ENCODE measurements at regions of chr11 and their contacts with region 1.

Region 1: DNA sequence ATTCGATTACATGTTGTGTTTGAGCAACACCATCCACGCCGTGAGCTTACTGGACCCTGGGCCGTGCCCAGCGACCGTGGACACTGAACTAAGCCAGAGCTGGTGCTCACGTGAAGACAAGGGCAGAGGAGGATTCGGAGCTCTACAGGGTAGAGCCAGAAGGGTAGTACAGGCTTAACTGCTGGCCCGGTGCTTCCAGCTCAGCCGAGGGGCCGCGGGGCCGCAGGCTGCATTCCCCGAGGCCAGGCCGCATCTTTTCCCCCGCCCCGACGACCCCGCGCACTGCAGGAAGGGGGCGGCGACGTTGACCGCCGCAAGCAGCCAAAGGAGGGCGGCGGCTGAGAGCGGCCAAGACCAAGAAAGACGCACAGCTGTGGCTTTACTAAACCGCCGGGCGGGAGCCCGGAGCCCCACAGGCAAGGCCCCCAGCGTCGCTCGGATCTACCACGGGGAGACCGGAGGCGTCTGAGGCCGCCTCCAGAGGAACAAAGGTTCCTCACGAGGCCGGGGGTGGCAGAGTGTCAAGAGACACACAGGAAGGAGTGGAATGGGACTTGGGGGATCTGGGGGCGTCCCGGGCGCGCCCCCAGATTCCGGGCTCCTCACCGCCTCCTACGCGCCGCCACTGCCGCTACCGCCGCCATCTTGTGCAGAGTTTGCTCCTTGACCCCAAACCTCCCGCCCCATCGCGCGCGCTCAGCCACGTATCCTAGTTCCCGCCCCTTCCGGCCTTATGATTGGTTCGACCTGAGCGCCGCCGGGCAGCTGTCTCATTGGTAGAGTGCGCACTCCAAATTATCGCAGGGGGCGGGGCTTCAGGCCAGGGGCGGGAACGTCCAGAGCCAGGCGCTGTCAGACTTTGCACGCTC is at the start of gene GANAB:
- DNase-seq: peak; percentile 99
- ATAC-seq: peak; percentile 98
- H3K4me3 ChIP-seq: peak within 1 kb of the TSS; percentile 95
- H3K27ac ChIP-seq: peak within 1 kb of the TSS; percentile 64
- H3K4me1 ChIP-seq: peaks cover 10% of the 10 kb centered on the region
- H3K27me3 ChIP-seq: no peaks in the 10 kb centered on the region
- CTCF ChIP-seq: no peak
- total RNA-seq, gene GANAB: 274 and 290 TPM in 2 replicates

Region 2: DNA sequence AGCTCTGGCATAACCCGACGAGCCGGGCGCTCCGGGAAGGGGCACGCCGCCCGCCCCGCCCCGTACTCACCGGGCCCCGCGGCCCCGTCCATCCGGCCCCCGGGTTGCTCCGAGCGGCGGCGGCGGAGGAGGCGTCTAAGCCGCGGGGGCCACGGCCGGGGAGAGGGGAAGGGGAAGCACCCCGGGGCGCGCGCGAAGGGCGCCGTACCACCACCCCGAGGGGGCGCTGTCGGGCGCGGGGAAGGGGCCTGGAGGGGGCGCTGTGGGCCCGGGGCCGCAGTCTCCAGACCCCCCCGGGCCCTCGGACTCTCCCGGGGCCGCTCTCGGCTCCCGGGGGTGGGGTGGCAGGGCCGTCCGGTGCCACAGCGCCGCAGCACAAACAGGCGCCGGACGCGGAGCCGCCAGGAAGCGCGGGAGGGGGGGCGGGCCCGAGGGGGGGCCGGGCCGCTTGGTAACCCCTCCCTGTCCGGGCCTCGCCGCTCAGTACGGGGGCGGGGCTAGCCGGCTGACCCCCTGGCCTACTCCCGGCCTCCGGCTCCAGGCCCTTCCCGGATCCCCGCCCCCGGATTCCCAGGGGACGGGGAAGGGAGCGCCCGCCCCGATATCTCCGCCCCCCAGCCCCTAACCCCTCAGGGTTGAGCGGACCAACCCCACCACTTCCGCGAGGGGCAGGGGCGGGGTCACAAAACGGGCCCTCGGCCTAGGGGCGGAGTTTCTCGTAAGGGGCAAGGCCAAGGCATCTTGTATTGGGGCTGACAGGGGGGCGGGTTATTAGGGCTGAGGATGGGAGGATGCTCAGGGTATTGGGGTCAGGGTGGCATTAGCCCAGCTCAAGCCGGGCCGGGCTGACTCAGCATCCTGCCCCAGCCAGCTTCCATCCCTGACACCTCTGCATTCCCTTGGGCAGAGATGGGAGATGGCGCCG is 33.6 kb before region 1 on chr11 and contains the starts of genes EML3 and ROM1:
- CTCF ChIA-PET with region 1: no interaction called
- POLR2A ChIA-PET with region 1: no interaction called
- intact Hi-C with region 1: loop called (anchors 5 kb)
- DNase-seq: peak; percentile 79
- ATAC-seq: peak; percentile 72
- H3K4me3 ChIP-seq: peak within 1 kb of the TSS; percentile 81
- H3K27ac ChIP-seq: peak within 1 kb of the TSS; percentile 59
- H3K4me1 ChIP-seq: peaks cover 29% of the 10 kb centered on the region
- H3K27me3 ChIP-seq: no peaks in the 10 kb centered on the region
- CTCF ChIP-seq: peak; percentile 97
- total RNA-seq, gene EML3: 32.8 and 50.6 TPM in 2 replicates
- total RNA-seq, gene ROM1: 5.8 and 13.9 TPM in 2 replicates

Region 3: DNA sequence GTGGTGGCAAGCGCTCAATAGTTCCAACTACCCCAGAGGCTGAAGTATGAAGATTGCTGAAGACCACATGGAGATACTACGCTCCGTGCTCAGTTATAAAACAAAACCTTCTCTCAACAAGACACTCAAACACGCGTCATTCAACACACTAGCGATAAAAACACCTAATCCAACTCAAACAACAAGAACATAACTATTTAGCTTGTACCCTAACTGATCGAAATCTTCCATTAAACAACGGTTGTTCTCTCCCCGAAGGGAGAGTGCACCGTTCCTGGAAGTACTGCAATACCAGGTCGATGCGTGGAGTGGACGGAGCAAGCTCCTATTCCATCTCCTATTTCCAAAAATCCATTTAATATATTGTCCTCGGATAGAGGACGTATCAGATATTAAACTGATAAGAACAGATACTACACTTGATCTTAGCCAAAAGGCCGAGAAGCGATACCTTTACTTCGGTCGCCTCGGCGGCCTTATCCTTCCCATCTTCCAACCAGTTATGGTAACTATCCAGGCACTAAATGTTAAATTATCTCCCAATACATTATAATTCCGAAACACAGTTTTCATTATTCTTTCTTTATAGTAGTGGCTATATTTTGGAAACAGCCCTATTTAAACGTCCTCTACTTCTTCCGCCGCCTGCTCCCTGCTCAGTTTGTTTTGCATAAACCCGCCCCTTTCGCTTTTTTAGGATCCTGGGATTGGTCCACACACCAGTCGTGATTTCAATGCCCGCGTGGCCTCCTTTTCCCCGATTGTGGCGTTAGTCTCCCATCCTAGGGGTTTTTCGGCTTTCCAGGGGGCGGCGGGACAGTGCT is 195.4 kb after region 1 on chr11:
- CTCF ChIA-PET with region 1: no interaction called
- POLR2A ChIA-PET with region 1: interaction called, 14 read pairs
- intact Hi-C with region 1: no loop called
- DNase-seq: peak; percentile 100
- ATAC-seq: peak; percentile 75
- H3K4me3 ChIP-seq: peak overlapping the region; percentile 64
- H3K27ac ChIP-seq: peak overlapping the region; percentile 90
- H3K4me1 ChIP-seq: peaks cover 6% of the 10 kb centered on the region
- H3K27me3 ChIP-seq: no peaks in the 10 kb centered on the region
- CTCF ChIP-seq: no peak

Region 4: GRCh38 chr11:63132985-63133775 is 487.0 kb after region 1 on chr11:
- CTCF ChIA-PET with region 1: no interaction called
- POLR2A ChIA-PET with region 1: no interaction called
- intact Hi-C with region 1: no loop called
- DNase-seq: no peak
- ATAC-seq: no peak
- H3K4me3 ChIP-seq: no peak overlapping the region
- H3K27ac ChIP-seq: no peak overlapping the region
- H3K4me1 ChIP-seq: no peaks in the 10 kb centered on the region
- H3K27me3 ChIP-seq: peaks cover 54% of the 10 kb centered on the region
- CTCF ChIP-seq: no peak

Measured in PC-3 (cell line).